Left ventricle myocardium inferior (tissue), 1 donor: ENCODE measurements at regions of chrX and their contacts with region 1.

Region 1: DNA sequence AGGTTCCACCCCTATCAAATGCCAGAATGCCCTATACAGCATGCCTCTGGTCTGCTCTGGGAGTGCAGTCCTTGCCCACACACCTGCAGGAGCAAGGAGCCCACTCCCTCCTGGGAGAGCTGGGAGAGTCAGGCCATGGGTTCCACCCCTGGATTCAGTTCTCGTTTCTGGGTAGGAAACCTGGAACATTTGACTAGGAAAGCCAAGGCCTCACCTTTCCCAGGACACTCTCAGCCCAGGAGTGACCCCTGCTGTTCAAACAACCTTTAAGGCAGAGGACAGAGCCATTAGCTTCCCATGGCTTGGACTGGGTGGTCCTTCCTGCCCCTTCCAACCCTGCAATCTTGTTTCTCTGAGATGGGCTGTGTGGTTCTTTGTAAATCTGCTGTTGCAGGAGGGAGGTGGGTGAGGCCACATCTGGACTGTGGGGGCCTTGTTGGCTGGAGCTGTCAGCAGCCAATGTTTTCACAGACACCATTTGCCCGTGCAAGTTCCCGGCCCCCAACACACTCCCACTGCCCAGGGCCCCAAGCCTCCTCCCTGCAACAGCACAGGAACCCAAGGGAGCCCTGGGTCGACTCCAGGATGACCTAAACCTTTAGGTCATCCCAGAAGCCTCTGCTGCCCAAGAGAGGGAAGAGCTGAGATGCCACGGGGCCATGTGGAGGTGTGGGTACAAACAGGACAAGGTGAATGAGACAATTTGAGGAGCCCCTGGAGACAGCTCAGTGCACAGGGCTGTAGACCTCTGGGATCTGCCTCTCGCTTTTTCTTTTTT is 104.4 kb downstream of the PJA1 start:
- DNase-seq: peak; percentile 26
- H3K4me3 ChIP-seq: no peak overlapping the region
- H3K27ac ChIP-seq: no peak overlapping the region
- H3K4me1 ChIP-seq: peaks cover 4% of the 10 kb centered on the region
- H3K27me3 ChIP-seq: no peaks in the 10 kb centered on the region
- CTCF ChIP-seq: peak; percentile 66

Region 2: GRCh38 chrX:68807818-68808217 is 253.0 kb before region 1 on chrX:
- intact Hi-C with region 1: no loop called
- DNase-seq: no peak
- H3K4me3 ChIP-seq: no peak overlapping the region
- H3K27ac ChIP-seq: no peak overlapping the region
- H3K4me1 ChIP-seq: no peaks in the 10 kb centered on the region
- H3K27me3 ChIP-seq: no peaks in the 10 kb centered on the region
- CTCF ChIP-seq: peak; percentile 63

Region 3: DNA sequence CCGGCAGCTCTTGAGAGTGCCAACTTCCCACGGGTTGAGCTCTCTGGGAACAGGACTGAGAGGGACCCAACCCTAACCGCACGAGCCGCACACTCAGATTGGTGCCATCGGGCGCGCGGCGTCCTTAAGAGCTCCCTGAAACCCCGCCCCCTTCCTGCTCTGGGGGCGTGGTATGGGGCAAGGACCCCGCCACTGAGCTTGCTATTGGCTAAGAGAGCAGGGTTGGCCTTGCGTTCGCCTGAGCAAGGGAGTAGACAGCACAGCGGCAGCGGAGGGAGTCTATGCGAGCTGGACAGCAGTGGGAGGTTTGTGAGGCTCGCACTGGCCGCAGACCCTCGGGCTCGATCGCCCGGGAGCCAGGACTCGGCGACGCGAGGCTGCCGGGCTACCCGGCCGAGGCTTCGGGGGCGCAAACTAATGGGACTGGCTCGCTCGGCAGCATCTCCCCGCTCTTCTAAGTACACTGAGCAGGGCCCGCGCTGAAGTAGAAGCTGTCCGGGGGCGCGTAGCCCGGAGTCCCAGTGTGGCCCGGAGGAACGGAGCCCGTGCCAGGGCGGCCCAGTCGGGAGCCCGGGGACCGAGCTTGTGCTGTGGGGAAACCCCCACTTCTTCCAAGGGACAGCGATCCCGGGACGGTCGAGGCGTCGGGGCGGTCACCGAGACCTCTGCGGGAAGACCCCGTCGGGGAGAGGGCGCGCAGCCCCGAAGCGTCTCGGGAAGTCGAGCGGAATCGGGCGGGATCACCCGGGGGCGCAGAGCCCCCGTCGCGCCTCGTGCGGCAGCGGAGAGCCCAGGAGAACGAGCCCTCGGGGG is 231.9 kb before region 1 on chrX and contains the start of gene EFNB1:
- intact Hi-C with region 1: loop called (anchors 5 kb)
- DNase-seq: peak; percentile 90
- H3K4me3 ChIP-seq: peak within 1 kb of the TSS; percentile 88
- H3K27ac ChIP-seq: peak within 1 kb of the TSS; percentile 89
- H3K4me1 ChIP-seq: peaks cover 43% of the 10 kb centered on the region
- H3K27me3 ChIP-seq: no peaks in the 10 kb centered on the region
- CTCF ChIP-seq: no peak
- total RNA-seq, gene EFNB1: 14.7 TPM

Region 4: GRCh38 chrX:68915778-68916177 is 145.0 kb before region 1 on chrX:
- intact Hi-C with region 1: no loop called
- DNase-seq: no peak
- H3K4me3 ChIP-seq: no peak overlapping the region
- H3K27ac ChIP-seq: no peak overlapping the region
- H3K4me1 ChIP-seq: no peaks in the 10 kb centered on the region
- H3K27me3 ChIP-seq: no peaks in the 10 kb centered on the region
- CTCF ChIP-seq: no peak

Region 5: DNA sequence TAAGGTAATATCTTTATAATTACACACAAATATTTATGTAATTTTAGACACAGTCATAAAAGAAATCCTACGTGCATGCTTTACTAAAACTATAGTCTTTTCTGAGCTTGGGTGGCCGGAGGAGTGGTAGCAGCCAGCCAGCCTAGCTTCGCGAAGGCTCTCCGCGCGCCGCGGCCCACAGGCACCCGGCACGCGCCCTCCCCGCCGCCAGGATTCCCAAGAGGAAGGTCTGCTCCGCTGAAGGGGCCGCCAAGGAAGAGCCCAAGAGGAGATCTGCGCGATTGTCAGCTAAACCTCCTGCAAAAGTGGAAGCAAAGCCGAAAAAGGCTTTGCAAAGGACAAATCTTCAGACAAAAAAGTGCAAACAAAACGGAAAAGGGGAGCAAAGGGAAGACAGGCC is 113.1 kb after region 1 on chrX:
- intact Hi-C with region 1: no loop called
- DNase-seq: no peak
- H3K4me3 ChIP-seq: no peak overlapping the region
- H3K27ac ChIP-seq: no peak overlapping the region
- H3K4me1 ChIP-seq: no peaks in the 10 kb centered on the region
- H3K27me3 ChIP-seq: no peaks in the 10 kb centered on the region
- CTCF ChIP-seq: no peak

Region 6: DNA sequence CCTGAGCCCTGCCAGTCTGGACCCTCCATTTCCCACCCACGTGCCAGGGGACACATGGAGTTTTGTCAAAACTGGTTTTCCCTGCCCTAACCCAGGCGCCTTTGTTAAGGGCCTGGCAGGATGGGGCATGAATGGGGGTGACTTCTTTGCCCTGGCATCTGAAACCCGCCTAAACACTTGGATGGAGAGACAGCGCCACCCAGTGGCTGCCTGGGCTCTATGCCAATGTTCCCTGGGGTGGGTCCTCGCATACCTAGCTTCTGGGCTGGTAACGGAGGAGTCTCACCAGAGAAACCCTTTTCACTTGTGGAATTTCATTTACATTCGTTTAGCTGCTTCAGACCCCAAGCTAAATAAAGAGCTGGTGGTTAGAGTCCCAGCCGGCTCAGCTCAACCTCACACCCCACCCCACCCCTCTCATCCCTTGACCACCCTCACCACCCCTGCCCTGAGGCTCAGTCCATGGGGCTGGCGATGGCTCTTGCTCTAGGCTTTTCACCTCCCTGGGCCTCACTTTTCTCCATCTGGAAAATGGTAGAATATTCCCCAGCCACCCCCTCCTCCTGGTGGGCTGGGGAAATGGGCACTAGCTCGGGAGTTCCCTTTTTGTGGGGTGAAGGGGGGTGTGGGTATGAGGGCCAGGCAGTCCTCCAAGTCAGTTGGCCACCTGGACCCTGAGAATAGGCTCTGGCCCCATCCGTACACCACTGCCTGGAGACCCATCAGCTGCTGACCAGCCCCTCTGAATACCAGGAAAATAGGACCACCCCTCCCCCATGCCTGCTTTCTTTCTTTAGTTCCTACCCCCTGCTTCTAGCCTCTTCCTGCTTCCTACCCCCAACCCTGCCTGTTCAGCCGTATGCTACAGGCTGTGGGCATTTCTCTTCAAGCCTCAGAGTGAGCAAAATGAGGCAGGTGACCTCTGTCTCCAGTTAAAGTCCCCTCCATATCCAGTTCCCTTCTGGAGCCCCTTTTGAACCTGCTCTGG is 161.6 kb after region 1 on chrX:
- intact Hi-C with region 1: no loop called
- DNase-seq: peak; percentile 50
- H3K4me3 ChIP-seq: no peak overlapping the region
- H3K27ac ChIP-seq: no peak overlapping the region
- H3K4me1 ChIP-seq: peaks cover 4% of the 10 kb centered on the region
- H3K27me3 ChIP-seq: no peaks in the 10 kb centered on the region
- CTCF ChIP-seq: peak; percentile 79